ENCODE measurements at regions of chr16 and their contacts with region 1.

Region 1: GRCh38 chr16:74852500-74852875 is 77.9 kb upstream of the FA2H start:
- DNase-seq: no peak
- H3K4me3 ChIP-seq: no peak overlapping the region
- H3K27ac ChIP-seq: no peak overlapping the region
- H3K4me1 ChIP-seq: no peaks in the 10 kb centered on the region
- H3K27me3 ChIP-seq: no peaks in the 10 kb centered on the region
- CTCF ChIP-seq: no peak
- POLR2A ChIP-seq: no peak

Region 2: GRCh38 chr16:74633686-74634085 is 218.8 kb before region 1 on chr16:
- intact Hi-C with region 1: no loop called
- DNase-seq: no peak
- H3K4me3 ChIP-seq: no peak overlapping the region
- H3K27ac ChIP-seq: no peak overlapping the region
- H3K4me1 ChIP-seq: no peaks in the 10 kb centered on the region
- H3K27me3 ChIP-seq: no peaks in the 10 kb centered on the region
- CTCF ChIP-seq: no peak
- POLR2A ChIP-seq: no peak

Region 3: DNA sequence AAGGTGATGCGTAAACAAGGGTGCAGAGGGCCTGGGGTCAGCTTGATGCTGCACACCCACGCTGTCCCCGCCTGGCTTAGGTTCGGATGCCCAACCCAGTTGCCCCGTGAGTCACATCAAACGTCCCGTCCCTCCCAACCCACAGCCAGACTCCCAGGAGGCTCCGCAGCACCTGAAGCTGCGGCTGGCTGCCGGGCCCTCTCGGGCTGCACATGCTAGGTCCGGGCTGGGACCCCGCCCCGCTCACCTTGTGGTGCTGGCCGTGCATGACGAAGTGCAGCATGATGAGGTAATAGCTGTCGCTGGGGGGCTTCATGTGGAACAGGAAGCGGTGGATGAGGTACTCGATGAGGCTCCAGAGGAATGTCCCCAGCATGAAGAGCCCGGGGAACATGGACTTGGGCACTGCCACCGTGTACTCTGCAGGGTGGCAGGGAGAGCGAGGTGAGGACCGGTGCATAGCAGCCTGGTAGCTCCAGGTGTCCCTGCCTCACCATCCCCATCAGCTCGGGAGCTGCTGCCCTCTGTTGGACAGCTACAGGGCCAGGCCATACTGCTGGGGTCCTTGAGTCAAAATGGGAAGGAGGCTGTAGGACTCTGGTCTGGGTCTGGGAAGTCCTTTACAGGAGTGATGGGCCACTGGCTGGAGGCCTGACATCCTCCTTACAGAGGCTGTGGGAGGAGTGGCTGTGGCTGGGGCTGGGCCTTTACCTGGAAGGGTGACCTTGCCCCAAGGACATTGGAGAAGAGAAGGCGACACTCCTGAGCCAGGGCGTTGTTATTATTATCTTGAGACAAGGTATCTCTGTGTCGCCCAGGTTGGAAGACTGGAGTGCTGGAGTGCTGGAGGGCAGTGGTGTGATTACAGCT is 133.5 kb before region 1 on chr16:
- intact Hi-C with region 1: loop called (anchors 10 kb)
- DNase-seq: no peak
- H3K4me3 ChIP-seq: no peak overlapping the region
- H3K27ac ChIP-seq: no peak overlapping the region
- H3K4me1 ChIP-seq: no peaks in the 10 kb centered on the region
- H3K27me3 ChIP-seq: no peaks in the 10 kb centered on the region
- CTCF ChIP-seq: no peak
- POLR2A ChIP-seq: no peak

Measured in uterus (tissue), 4 donors.